Gastrocnemius medialis (tissue), 4 donors: ENCODE measurements at regions of chr1 and their contacts with region 1.

Region 1: GRCh38 chr1:56547953-56548352 is 31.4 kb downstream of the PLPP3 start:
- DNase-seq: peak; percentile 51 to 77
- ATAC-seq: peak; percentile 80 to 88
- H3K4me3 ChIP-seq: no peak overlapping the region
- H3K27ac ChIP-seq: peak overlapping the region; percentile 31 to 73 (median 48)
- H3K4me1 ChIP-seq: peaks cover 80 to 87% of the 10 kb centered on the region in 2 donors
- H3K27me3 ChIP-seq: no peaks in the 10 kb centered on the region
- CTCF ChIP-seq: no peak
- POLR2A ChIP-seq: no peak

Region 2: DNA sequence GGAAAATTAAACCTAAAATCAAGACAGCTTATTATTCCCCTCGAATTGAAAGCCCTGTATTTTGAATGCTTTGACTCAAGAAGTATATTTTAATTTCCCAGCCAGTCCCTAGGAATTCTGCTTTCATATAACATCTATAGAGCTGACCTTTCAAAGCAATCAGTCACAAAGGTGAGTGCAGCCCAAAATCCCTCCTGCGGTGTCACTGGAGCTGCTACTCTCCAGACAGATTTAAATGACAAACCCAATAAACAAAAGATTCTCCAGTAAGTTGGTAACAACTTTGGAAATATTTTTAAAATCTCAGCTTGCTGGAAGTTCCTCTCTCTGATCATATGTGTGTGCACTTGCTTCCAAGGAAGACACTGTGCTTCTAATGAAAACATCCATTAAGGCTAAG is 16.7 kb after region 1 on chr1:
- in situ Hi-C with region 1: no loop called
- intact Hi-C with region 1: loop called (anchors 2 kb)
- DNase-seq: no peak
- ATAC-seq: no peak
- H3K4me3 ChIP-seq: no peak overlapping the region
- H3K27ac ChIP-seq: no peak overlapping the region
- H3K4me1 ChIP-seq: peaks cover 51 to 58% of the 10 kb centered on the region in 2 donors
- H3K27me3 ChIP-seq: no peaks in the 10 kb centered on the region
- CTCF ChIP-seq: no peak
- POLR2A ChIP-seq: no peak